ENCODE measurements at regions of chr17 and their contacts with region 1.

Region 1: DNA sequence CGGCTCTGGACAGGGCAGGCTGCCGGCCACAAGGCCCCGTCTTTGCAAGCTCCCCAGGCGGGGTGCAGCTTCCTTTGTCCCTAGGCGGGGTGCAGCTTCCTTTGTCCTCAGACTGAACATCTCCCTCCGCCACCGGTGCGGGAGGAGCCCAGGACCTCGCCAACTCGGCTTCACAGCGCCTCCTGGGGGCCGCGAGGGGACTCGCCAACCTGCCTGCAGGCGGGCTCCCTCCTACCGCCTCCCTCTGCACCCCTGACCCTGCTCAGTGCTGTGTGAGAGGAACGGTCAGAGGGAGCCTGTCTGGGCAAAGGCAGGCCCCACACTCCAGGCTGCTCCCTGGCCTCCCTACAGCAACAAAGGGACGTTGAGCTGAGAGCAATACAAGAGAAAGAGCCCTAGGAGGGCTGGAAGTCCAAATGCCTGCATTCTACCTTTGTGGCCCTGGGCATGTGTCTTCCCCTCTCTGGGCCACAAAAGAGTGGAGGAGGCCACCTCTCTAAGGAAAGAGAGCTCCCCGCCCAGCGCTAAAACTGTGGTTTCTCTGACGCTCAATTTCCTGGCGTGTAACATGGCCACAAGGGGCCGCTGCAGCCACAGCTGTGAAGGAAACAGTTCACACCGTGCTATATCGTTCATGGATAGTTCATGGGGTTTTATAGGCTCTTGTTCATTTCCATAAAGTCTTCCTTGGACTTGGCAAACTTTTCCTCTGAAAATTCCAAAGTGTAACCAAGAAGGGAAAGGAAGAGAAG is 20.9 kb upstream of the KRT19 start:
- DNase-seq: peak; percentile 91
- H3K4me3 Mint-ChIP-seq: no peak overlapping the region
- H3K27ac Mint-ChIP-seq: peak overlapping the region; percentile 82
- H3K4me1 Mint-ChIP-seq: peaks cover 23% of the 10 kb centered on the region
- H3K27me3 Mint-ChIP-seq: peaks cover 46% of the 10 kb centered on the region

Region 2: DNA sequence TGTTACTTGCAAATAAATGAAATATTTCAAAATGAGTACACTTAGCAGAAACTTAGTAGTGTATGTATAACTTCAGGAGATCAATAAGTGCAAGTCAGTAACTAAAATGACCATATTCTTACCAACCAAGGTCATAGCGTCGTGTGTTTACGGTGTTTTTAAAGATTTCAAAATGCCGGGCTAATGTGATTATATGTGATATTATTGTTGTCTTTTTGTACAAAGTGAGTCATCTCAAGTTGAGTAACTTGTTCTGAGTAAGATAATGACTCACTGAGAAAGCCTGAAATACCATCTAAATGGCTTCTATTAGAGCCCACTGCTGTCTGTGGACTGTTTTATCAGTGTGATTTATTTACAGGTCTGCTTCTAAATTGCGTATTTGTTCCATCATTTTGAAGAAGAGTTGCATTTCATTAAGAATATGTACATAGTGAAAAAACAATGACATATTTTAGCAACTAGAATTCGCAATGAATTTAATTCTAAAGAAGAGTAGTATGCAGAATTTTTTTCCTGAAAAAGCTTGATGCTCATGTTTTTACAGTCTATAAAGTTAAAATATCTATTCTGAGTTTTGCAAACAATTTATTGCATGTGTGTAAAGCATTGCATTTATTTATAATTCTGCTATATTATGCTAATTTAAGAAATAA is 694.7 kb before region 1 on chr17:
- CTCF ChIA-PET with region 1: interaction called, 29 read pairs
- DNase-seq: no peak
- H3K4me3 Mint-ChIP-seq: no peak overlapping the region
- H3K27ac Mint-ChIP-seq: no peak overlapping the region
- H3K4me1 Mint-ChIP-seq: peaks cover 2% of the 10 kb centered on the region
- H3K27me3 Mint-ChIP-seq: peaks cover 4% of the 10 kb centered on the region

Region 3: DNA sequence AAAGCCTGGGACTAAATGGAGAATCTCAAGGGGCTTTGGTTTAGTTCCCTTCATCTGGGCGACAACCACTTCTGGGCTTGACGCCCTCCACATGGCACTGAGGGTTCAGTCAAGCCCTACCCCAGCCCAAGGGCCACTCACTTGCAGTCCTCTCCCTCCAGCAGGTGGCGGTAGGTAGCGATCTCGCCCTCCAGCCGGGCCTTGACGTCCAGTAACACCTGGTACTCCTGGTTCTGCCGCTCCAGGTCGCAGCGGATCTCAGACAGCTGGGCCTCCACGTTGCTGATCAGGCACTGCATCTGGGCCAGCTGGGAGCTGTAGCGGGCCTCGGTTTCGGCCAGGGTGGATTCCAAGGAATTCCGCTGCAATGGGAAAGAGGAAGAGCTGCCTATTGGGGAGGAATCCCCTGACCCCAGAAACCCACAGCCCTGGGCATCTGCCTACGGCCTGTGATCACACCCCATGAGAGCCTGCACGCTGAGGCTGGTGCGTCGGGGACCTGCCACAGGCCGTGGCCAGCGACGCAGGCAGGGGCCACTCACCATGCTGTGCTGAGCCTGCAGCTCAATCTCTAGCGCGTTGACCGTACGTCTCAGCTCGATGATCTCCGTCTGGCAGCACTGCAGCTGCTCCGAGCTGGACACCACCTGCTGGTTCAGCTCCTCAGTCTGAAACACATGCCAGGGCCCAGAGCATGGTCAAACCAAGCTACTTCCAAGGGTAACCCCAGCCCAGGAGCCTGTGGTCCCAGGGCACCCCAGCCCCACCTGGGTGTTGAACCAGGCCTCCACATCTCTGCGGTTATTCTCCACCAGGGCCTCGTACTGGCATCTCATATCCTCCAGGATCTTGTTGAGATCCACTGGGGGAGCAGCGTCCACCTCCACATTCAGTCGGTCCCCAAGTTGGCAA is 62.0 kb before region 1 on chr17:
- CTCF ChIA-PET with region 1: interaction called, 16 read pairs
- DNase-seq: peak; percentile 54
- H3K4me3 Mint-ChIP-seq: no peak overlapping the region
- H3K27ac Mint-ChIP-seq: no peak overlapping the region
- H3K4me1 Mint-ChIP-seq: peaks cover 3% of the 10 kb centered on the region
- H3K27me3 Mint-ChIP-seq: peaks cover 7% of the 10 kb centered on the region

Region 4: DNA sequence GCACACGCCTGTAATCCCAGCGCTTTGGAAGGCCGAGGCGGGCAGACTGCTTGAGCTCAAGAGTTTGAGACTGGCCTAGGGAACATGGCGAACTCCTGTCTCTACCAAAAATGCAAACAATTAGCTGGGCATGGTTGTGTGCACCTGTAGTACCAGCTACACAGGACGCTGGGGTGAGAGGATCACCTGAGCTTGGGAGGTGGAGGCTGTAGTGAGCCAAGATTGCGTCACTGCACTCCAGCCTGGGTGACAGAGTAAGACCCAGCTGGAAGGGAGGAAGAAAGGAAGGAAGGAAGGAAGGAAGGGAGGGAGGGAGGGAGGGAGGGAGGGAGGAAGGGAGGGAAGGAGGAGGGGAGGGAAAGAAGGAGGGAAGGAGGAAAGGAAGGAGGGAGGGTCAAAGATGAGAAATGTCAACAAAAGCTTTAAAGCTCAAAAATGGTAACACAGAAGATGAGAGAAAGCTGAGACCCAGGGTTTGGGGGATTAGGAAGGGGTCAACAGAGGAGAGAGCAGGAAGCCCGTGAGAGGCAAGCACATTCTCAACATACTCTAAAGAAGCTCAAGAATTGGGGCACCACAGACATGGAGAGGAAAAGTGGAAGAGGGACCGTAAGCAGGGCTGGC is 16.0 kb before region 1 on chr17:
- CTCF ChIA-PET with region 1: interaction called, 17 read pairs
- DNase-seq: no peak
- H3K4me3 Mint-ChIP-seq: no peak overlapping the region
- H3K27ac Mint-ChIP-seq: no peak overlapping the region
- H3K4me1 Mint-ChIP-seq: peaks cover 2% of the 10 kb centered on the region
- H3K27me3 Mint-ChIP-seq: peaks cover 76% of the 10 kb centered on the region

Region 5: GRCh38 chr17:41559548-41559947 is 10.5 kb after region 1 on chr17:
- CTCF ChIA-PET with region 1: interaction called, 33 read pairs
- DNase-seq: no peak
- H3K4me3 Mint-ChIP-seq: no peak overlapping the region
- H3K27ac Mint-ChIP-seq: no peak overlapping the region
- H3K4me1 Mint-ChIP-seq: no peaks in the 10 kb centered on the region
- H3K27me3 Mint-ChIP-seq: peaks cover 66% of the 10 kb centered on the region

Region 6: DNA sequence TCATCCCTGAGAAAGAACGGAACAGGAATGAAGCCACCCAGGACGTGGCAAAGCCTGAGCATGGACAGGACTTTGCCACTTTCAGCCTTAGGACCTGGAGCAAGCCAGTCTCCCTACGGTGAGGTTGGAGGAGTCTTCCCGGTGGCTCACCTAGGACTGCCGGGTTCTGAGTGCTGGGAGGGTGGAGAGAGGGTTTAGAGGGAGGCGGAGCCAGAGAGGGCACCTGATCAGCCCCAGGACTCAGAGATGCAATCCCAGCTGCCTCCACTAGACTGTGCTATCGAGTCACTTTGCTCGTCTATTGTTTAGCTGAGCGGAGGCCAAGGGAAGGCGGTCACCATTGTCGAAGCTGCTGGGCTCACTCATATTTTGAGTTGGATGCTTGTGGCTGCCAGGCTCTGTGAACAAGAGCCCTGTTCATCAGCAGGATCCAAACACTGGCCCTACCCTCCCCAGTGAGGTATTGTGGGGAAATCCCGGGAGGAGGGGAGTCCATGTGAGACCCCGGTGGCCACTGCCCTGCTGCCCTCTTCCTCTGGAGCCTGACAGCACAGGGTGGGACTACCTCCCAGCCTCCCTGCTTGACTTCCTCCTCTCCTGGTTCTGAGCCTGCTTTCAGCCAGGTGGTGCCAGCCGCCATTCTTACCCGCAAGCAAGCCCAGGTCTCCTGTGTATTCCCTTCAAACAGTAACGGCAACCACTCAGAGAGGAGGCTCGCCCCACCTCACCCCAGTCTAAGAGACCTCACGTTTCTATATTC is 30.6 kb after region 1 on chr17:
- CTCF ChIA-PET with region 1: interaction called, 18 read pairs
- DNase-seq: peak; percentile 85
- H3K4me3 Mint-ChIP-seq: no peak overlapping the region
- H3K27ac Mint-ChIP-seq: no peak overlapping the region
- H3K4me1 Mint-ChIP-seq: no peaks in the 10 kb centered on the region
- H3K27me3 Mint-ChIP-seq: peaks cover 80% of the 10 kb centered on the region

Region 7: GRCh38 chr17:41665566-41666236 is 116.7 kb after region 1 on chr17:
- CTCF ChIA-PET with region 1: interaction called, 165 read pairs
- DNase-seq: peak; percentile 90
- H3K4me3 Mint-ChIP-seq: peak overlapping the region; percentile 83
- H3K27ac Mint-ChIP-seq: peak overlapping the region; percentile 98
- H3K4me1 Mint-ChIP-seq: peaks cover 47% of the 10 kb centered on the region
- H3K27me3 Mint-ChIP-seq: peaks cover 44% of the 10 kb centered on the region

Measured in activated naive CD4-positive, alpha-beta T cell treated with anti-CD3 and anti-CD28 coated beads, Interleukin-2, amount 10 ng/mL, durations not matched to agents 7 days and 5 days (primary cell).